Activated B cell treated with CpG ODN at 0.5 μM for 24 hours (primary cell): ENCODE measurements at regions of chr19 and their contacts with region 1.

Region 1: GRCh38 chr19:45681391-45682015 is 10.2 kb downstream of the SNRPD2 start:
- DNase-seq: peak; percentile 92
- ATAC-seq: peak; percentile 92
- H3K4me3 Mint-ChIP-seq: peak overlapping the region; percentile 77
- H3K27ac Mint-ChIP-seq: no peak overlapping the region
- H3K4me1 Mint-ChIP-seq: peaks cover 17% of the 10 kb centered on the region
- H3K27me3 Mint-ChIP-seq: peaks cover 7% of the 10 kb centered on the region
- CTCF ChIP-seq: peak; percentile 69

Region 2: DNA sequence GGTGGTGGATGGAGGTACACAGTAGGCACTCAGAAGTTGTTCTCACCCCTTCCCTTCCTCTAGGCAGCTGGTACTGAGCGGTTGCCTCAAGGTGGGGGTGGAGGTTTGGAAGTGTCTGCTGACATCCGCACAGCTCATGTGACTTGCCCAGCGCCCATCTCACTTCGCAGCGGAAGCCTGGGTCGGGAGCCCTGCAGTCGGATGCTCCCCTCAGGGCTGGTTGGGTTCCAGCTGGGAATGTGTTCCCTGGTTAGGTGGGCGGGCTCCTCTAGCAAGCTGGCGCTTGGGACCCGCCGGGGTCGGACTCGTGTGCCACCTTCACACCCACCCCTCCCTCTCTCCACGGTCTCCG is 578.4 kb before region 1 on chr19:
- CTCF ChIA-PET with region 1: no interaction called
- POLR2A ChIA-PET with region 1: interaction called, 14 read pairs
- intact Hi-C with region 1: no loop called
- DNase-seq: no peak
- ATAC-seq: peak; percentile 69
- H3K4me3 Mint-ChIP-seq: peak overlapping the region; percentile 57
- H3K27ac Mint-ChIP-seq: peak overlapping the region; percentile 77
- H3K4me1 Mint-ChIP-seq: peaks cover 65% of the 10 kb centered on the region
- H3K27me3 Mint-ChIP-seq: no peaks in the 10 kb centered on the region
- CTCF ChIP-seq: no peak

Region 3: DNA sequence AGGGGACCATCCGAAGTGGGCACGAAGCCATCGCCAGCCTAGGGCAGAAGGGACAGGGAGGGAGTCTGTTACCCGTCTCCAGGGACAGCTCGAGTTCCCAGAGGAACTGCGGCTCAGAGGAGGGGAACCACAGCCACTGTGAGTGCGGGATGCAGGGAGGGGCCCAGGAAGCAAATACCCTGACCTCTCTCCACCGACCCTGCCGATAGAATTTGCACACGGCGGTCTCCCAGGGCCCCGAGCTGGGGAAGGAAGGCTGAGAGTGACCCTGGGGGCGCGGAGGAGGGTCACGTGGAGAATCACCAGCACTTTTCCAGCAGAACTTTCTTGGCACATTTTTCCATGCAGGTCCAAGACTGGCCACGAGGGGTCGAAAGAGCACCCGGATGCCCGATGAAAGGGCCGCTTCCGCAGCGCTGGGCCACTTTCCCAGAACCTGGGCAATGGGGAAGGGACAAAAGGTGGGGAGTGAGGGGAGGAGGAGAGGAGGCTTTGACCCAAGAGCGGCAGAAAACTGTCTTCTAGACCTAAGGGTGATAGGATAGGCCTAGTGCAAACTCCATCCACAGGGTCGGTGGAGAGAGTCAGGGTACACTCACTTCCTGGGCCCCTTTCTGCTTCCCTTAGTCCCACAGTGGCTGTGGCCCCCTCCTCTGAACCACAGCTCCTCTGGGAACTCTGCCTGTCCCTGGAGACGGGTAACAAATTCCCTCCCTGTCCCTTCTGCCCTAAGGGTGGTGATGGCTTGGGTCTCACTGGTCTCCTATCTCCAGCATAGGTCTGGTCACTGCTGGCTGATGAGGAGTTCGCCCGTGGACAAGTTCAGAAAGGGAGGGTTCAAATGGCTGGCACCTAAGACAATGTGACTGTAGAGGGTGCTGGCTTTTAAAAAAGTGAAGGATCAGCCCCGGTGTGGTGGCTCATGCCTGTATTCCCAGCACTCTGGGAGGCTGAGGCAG is 74.2 kb before region 1 on chr19:
- CTCF ChIA-PET with region 1: no interaction called
- POLR2A ChIA-PET with region 1: no interaction called
- intact Hi-C with region 1: loop called (anchors 1 kb)
- DNase-seq: peak; percentile 40
- ATAC-seq: peak; percentile 61
- H3K4me3 Mint-ChIP-seq: peak overlapping the region; percentile 24
- H3K27ac Mint-ChIP-seq: peak overlapping the region; percentile 24
- H3K4me1 Mint-ChIP-seq: peaks cover 11% of the 10 kb centered on the region
- H3K27me3 Mint-ChIP-seq: peaks cover 10% of the 10 kb centered on the region
- CTCF ChIP-seq: no peak

Region 4: DNA sequence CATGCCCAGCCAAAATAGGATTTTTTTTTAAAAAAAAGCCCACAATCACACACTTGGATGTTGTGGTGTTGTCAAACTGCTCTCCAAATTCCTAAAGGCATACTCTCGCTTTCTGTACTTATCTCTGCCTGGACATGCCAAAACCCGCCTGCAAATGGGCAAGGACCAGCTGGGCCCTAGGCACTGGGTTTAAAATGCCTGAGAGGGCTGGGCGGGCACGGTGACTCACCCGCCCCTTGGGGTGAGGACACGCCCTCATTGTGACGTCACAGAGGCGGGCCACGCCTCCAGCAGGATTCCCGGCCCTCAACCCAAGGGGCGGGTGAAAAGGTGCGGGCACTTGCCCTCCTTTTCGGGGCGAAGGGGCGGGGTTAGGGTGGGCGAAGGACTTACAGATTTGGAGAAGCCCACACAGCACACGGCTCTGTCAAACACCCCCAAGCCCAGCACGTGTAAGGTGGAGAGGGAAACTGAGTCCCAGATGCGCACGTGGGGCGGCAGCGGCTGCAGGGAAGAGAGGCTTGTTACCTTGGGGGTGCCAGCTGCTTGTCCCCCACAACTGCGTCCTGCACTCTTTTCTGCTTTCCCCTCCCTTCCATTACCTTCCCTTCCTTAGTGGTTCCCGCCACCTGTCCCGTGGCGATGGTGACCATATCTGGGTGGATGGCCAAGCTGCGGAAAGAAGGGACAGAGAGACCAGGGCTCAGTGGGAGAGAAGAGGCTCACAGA is 48.9 kb before region 1 on chr19:
- CTCF ChIA-PET with region 1: no interaction called
- POLR2A ChIA-PET with region 1: no interaction called
- intact Hi-C with region 1: no loop called
- DNase-seq: peak; percentile 42
- ATAC-seq: peak; percentile 42
- H3K4me3 Mint-ChIP-seq: no peak overlapping the region
- H3K27ac Mint-ChIP-seq: no peak overlapping the region
- H3K4me1 Mint-ChIP-seq: peaks cover 14% of the 10 kb centered on the region
- H3K27me3 Mint-ChIP-seq: no peaks in the 10 kb centered on the region
- CTCF ChIP-seq: no peak

Region 5: GRCh38 chr19:45670670-45671453 is 10.6 kb before region 1 on chr19:
- CTCF ChIA-PET with region 1: interaction called, 5 read pairs
- POLR2A ChIA-PET with region 1: interaction called, 4 read pairs
- intact Hi-C with region 1: loop called (anchors 1 kb)
- DNase-seq: peak; percentile 47
- ATAC-seq: peak; percentile 61
- H3K4me3 Mint-ChIP-seq: peak overlapping the region; percentile 52
- H3K27ac Mint-ChIP-seq: no peak overlapping the region
- H3K4me1 Mint-ChIP-seq: peaks cover 32% of the 10 kb centered on the region
- H3K27me3 Mint-ChIP-seq: peaks cover 27% of the 10 kb centered on the region
- CTCF ChIP-seq: no peak

Region 6: GRCh38 chr19:45895519-45895972 is 214.0 kb after region 1 on chr19:
- CTCF ChIA-PET with region 1: no interaction called
- POLR2A ChIA-PET with region 1: no interaction called
- intact Hi-C with region 1: no loop called
- DNase-seq: no peak
- ATAC-seq: no peak
- H3K4me3 Mint-ChIP-seq: no peak overlapping the region
- H3K27ac Mint-ChIP-seq: no peak overlapping the region
- H3K4me1 Mint-ChIP-seq: peaks cover 23% of the 10 kb centered on the region
- H3K27me3 Mint-ChIP-seq: no peaks in the 10 kb centered on the region
- CTCF ChIP-seq: no peak